Right cardiac atrium (tissue), 5 donors: ENCODE measurements at regions of chr1 and their contacts with region 1.

Region 1: GRCh38 chr1:157193702-157194391 is 55.7 kb upstream of the ETV3 start:
- DNase-seq: peak; percentile 43 to 77 (median 76)
- ATAC-seq: no peak
- H3K4me3 ChIP-seq: no peak overlapping the region
- H3K27ac ChIP-seq: no peak overlapping the region
- H3K4me1 ChIP-seq: no peaks in the 10 kb centered on the region
- H3K27me3 ChIP-seq: no peaks in the 10 kb centered on the region

Region 2: DNA sequence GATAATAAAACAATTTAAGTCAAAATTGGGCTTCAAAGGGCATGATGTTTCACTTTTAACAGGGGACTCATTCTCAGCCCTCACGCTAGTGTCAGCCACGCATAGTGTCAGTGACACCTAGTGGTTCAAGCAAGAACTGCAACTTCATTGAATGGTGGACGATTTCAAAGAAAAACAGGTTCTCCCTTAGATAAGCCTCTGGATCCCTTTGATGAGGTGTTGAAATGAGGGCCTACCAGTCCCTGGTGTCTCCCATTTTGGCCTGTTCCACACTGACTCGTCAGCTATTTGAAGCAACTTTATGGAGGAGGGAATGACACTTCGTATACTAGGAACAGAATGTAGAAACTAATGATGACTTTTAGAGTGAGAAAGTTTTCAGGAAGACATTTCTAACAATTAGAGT is 302.3 kb after region 1 on chr1:
- intact Hi-C with region 1: loop called in 1 of 4 experiments (anchors 5 kb)
- DNase-seq: no peak
- ATAC-seq: peak; percentile 26 to 63
- H3K4me3 ChIP-seq: no peak overlapping the region
- H3K27ac ChIP-seq: no peak overlapping the region
- H3K4me1 ChIP-seq: no peaks in the 10 kb centered on the region
- H3K27me3 ChIP-seq: no peaks in the 10 kb centered on the region